ENCODE measurements at regions of chr2 and their contacts with region 1.

Region 1: GRCh38 chr2:20625491-20626391 is 25.2 kb downstream of the HS1BP3 start:
- DNase-seq: peak in 2 of 3 donors; percentile 61 to 70
- ATAC-seq: peak in 1 of 2 donors; percentile 28
- H3K4me3 ChIP-seq: no peak overlapping the region
- H3K27ac ChIP-seq: peak overlapping the region; percentile 79
- H3K4me1 ChIP-seq: peaks cover 17% of the 10 kb centered on the region
- H3K27me3 ChIP-seq: no peaks in the 10 kb centered on the region

Region 2: GRCh38 chr2:19714926-19715325 is 910.8 kb before region 1 on chr2:
- intact Hi-C with region 1: no loop called
- DNase-seq: no peak
- ATAC-seq: no peak
- H3K4me3 ChIP-seq: no peak overlapping the region
- H3K27ac ChIP-seq: no peak overlapping the region
- H3K4me1 ChIP-seq: peaks cover 7% of the 10 kb centered on the region
- H3K27me3 ChIP-seq: no peaks in the 10 kb centered on the region

Region 3: GRCh38 chr2:20125616-20126015 is 500.1 kb before region 1 on chr2:
- intact Hi-C with region 1: no loop called
- DNase-seq: no peak
- ATAC-seq: peak in 1 of 2 donors; percentile 10
- H3K4me3 ChIP-seq: no peak overlapping the region
- H3K27ac ChIP-seq: no peak overlapping the region
- H3K4me1 ChIP-seq: no peaks in the 10 kb centered on the region
- H3K27me3 ChIP-seq: no peaks in the 10 kb centered on the region

Region 4: DNA sequence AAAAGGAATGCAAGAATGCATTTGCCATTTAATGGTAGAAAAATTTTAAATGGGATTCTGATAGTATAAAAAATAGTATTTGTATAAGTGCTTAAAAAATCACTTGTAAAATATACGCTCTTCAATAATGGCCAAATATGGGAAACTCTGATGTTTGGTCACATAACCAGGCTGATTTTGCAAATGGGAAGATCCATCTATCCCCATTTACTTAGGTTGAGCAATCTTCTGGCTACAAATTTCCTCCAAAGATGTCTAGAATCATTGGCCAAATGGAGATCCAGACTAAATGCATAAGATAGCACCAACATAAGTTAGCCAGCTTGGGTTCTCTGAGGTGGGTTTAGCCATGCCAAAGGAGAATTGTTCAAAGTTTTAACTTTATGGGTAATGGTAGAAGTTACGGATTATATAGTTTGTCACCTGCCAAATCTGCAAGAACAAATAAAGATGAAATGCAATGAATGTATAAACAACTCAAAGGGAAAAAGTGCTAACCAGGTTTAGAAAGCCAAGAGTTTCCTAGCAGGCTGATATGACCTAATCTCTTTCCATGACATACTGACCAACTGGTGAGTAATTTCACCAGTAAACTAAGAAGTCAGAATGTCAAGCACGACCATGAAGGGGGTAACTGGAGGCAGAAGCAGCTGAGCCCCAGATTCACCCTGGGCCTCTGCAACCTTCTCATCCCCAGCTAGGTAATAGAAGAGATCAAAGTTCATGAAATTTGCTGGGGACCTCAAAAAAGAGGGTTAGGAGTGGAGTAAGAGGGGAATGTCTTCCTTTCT is 168.9 kb before region 1 on chr2:
- intact Hi-C with region 1: no loop called
- DNase-seq: no peak
- ATAC-seq: peak in 1 of 2 donors; percentile 31
- H3K4me3 ChIP-seq: no peak overlapping the region
- H3K27ac ChIP-seq: no peak overlapping the region
- H3K4me1 ChIP-seq: no peaks in the 10 kb centered on the region
- H3K27me3 ChIP-seq: no peaks in the 10 kb centered on the region

Region 5: GRCh38 chr2:20516646-20517341 is 108.9 kb before region 1 on chr2:
- intact Hi-C with region 1: loop called in 1 of 4 experiments (anchors 10 kb)
- DNase-seq: peak; percentile 57 to 78 (median 78)
- ATAC-seq: peak; percentile 73 to 76
- H3K4me3 ChIP-seq: no peak overlapping the region
- H3K27ac ChIP-seq: no peak overlapping the region
- H3K4me1 ChIP-seq: no peaks in the 10 kb centered on the region
- H3K27me3 ChIP-seq: no peaks in the 10 kb centered on the region

Region 6: DNA sequence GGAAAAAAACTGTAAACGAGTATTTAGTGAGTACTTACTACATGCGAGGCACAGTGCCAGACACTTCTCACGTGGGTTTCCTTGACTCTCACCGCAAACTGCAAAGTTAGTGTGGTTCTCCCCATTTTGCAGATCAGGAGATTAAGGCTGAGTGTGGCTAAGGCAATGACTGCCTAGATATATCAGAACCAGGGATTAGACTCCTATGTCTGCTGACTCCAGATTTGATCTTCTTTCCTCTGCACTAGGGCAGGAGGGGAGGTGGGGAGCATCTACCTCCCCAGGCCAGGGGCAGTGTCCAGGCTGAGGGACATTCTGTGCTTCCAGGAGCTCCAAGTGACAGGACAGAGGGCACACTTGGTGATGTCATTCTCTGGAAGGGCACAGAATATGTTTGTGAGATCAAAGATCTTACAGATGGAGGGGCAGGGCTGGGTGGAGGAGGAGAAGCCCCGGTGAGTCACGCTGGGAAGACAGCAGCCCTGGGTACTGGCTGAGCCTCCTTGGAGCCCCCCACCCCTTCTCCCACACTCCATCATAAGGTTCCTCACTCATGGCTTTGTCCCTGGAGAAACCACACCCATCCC is 86.5 kb before region 1 on chr2:
- intact Hi-C with region 1: no loop called
- DNase-seq: no peak
- ATAC-seq: peak in 1 of 2 donors; percentile 6
- H3K4me3 ChIP-seq: no peak overlapping the region
- H3K27ac ChIP-seq: no peak overlapping the region
- H3K4me1 ChIP-seq: no peaks in the 10 kb centered on the region
- H3K27me3 ChIP-seq: no peaks in the 10 kb centered on the region

Region 7: DNA sequence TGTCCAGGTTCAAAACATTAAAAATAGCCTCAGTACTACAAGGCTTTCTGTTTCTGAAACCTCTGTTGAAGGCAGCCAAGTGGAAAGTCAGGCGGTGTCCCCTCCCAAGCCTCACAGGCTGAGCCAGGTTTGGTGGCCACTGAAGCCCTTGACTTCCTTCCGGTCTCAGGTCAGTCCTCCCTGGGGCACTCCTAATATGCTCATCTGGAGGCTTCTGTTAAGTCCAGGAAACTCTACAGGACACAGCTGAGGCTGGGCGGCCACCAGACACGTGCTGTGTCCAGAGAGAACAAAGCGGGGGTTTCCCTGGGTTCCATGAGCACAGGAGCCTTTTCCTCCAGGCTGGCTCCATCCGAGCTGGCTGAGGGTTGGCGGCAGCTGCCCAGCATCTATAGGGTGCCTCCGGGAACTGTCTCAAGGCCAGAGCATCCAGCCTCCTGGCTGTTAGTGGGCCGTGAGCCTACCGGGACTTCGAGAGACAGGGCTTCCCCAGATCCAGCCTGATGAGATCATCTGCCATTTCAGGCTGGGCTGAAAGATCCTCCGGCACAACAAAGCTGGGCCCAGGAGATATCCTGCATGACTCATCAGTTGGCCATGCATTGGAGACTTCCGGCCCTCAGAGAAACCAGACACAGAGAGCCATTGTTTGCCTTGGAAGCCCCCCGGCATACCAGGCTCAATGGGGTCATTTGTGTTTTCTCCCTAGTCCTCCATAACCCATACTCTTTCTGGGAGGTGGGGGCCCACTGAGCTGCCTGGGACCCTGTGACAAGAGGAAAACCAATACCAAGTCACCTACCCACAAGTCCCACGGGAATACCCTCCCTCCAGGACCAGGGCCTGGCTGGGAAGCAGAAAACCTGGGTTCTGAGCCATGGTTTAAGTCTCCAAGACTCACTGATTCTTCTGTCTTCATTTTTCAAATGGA is 46.6 kb before region 1 on chr2:
- intact Hi-C with region 1: loop called in 1 of 4 experiments (anchors 10 kb)
- DNase-seq: peak; percentile 87 to 88 (median 88)
- ATAC-seq: peak; percentile 86 to 92
- H3K4me3 ChIP-seq: no peak overlapping the region
- H3K27ac ChIP-seq: peak overlapping the region; percentile 99
- H3K4me1 ChIP-seq: peaks cover 39% of the 10 kb centered on the region
- H3K27me3 ChIP-seq: no peaks in the 10 kb centered on the region